ENCODE measurements at regions of chr19 and their contacts with region 1.

Region 1: DNA sequence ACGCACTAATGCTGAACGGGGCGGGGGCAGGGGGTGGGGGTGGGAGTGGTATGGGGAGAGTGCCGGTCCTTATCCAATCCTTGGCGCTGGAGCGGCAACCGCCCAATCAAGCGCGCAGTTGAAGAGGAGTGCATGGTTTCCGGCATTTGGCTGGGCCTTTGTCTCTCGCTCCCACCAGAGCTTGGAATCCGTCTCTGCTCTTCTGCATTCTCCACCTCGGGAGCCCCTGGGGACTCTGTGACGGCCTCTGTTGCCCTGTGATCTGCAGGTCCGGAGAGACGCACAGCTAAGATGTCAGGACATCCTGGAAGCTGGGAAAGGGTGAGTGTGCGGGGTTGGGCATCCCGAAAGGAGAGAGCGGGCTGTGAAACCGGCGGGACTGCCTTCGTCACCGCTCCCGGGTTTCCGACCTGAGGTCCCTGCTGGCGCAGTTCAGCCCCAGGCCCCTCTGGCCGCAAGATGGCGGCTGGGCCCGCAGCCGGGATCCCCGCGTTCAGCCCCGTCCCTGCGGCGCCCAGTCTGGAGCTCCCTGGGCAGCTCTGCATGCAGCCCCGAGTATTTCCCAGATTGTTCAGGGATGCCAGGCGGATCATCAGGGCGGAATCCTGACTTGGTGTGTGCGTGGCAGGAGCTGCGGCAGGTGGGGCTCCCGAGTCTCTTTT is 53.6 kb upstream of the ZNF254 start:
- DNase-seq: peak; percentile 90
- ATAC-seq: peak; percentile 99
- H3K4me3 Mint-ChIP-seq: peak overlapping the region; percentile 99
- H3K27ac Mint-ChIP-seq: peak overlapping the region; percentile 98
- H3K4me1 Mint-ChIP-seq: peaks cover 36% of the 10 kb centered on the region
- H3K27me3 Mint-ChIP-seq: no peaks in the 10 kb centered on the region

Region 2: GRCh38 chr19:23758187-23759074 is 275.0 kb before region 1 on chr19 and contains the start of gene ZNF681:
- CTCF ChIA-PET with region 1: interaction called, 3 read pairs
- POLR2A ChIA-PET with region 1: interaction called, 3 read pairs
- intact Hi-C with region 1: loop called (anchors 2 to 5 kb)
- DNase-seq: peak; percentile 94
- ATAC-seq: peak; percentile 93
- H3K4me3 Mint-ChIP-seq: peak within 1 kb of the TSS; percentile 95
- H3K27ac Mint-ChIP-seq: peak within 1 kb of the TSS; percentile 95
- H3K4me1 Mint-ChIP-seq: peaks cover 25% of the 10 kb centered on the region
- H3K27me3 Mint-ChIP-seq: no peaks in the 10 kb centered on the region
- total RNA-seq, gene ZNF681: 5.7 to 9.1 TPM

Region 3: GRCh38 chr19:24054549-24054935 is 21.1 kb after region 1 on chr19:
- CTCF ChIA-PET with region 1: no interaction called
- POLR2A ChIA-PET with region 1: no interaction called
- intact Hi-C with region 1: loop called (anchors 1 to 2 kb)
- DNase-seq: peak; percentile 25
- ATAC-seq: peak; percentile 86
- H3K4me3 Mint-ChIP-seq: no peak overlapping the region
- H3K27ac Mint-ChIP-seq: peak overlapping the region; percentile 81
- H3K4me1 Mint-ChIP-seq: peaks cover 25% of the 10 kb centered on the region
- H3K27me3 Mint-ChIP-seq: no peaks in the 10 kb centered on the region

Region 4: GRCh38 chr19:24086974-24087595 is 53.7 kb after region 1 on chr19 and contains the start of gene ZNF254:
- CTCF ChIA-PET with region 1: interaction called, 5 read pairs
- POLR2A ChIA-PET with region 1: interaction called, 7 read pairs
- intact Hi-C with region 1: loop called (anchors 1 kb)
- DNase-seq: peak; percentile 93
- ATAC-seq: peak; percentile 100
- H3K4me3 Mint-ChIP-seq: peak within 1 kb of the TSS; percentile 94
- H3K27ac Mint-ChIP-seq: peak within 1 kb of the TSS; percentile 97
- H3K4me1 Mint-ChIP-seq: peaks cover 6% of the 10 kb centered on the region
- H3K27me3 Mint-ChIP-seq: no peaks in the 10 kb centered on the region
- total RNA-seq, gene ZNF254: 8.8 to 9.6 TPM

Measured in activated CD4-positive, alpha-beta T cell treated with anti-CD3 and anti-CD28 coated beads for 36 hours (primary cell).